ENCODE measurements at regions of chr17 and their contacts with region 1.

Region 1: DNA sequence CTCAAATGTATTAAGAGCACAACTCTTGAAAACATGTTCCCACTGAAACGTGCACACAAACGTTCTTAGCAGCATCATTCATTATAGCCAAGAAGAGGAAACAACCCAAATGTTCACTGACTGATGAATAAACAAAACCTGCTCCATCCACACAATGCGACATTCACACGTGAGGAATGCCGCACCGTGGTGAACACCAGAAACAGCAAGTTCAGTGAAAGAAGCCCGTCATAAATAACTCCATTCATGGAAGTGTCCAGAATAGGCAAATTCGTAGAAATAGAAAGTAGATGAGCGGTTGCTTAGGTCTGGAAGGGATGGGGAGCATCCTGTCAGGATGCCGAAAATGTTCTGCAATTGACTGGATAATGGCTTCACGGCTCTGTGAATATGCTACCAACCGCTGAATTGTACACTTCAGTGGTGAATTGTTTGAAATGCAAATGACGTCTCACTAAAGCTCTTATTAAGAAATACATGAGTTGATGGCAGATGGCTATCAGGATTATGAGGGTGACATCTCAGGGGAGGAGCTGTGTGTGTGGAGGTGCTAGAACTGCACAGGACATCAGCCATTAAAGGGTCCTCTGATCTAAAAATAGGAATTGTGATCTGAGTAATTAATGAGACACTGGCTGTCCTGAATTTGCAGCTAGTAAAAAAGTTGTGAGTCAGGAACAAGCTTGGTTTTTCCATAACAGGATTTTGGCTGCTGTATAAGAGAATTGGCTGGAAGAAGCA is 771.0 kb downstream of the KCNJ18 start:
- DNase-seq: no peak
- H3K4me3 ChIP-seq: no peak overlapping the region
- H3K27ac ChIP-seq: no peak overlapping the region
- H3K4me1 ChIP-seq: no peaks in the 10 kb centered on the region
- H3K27me3 ChIP-seq: no peaks in the 10 kb centered on the region
- CTCF ChIP-seq: no peak

Region 2: DNA sequence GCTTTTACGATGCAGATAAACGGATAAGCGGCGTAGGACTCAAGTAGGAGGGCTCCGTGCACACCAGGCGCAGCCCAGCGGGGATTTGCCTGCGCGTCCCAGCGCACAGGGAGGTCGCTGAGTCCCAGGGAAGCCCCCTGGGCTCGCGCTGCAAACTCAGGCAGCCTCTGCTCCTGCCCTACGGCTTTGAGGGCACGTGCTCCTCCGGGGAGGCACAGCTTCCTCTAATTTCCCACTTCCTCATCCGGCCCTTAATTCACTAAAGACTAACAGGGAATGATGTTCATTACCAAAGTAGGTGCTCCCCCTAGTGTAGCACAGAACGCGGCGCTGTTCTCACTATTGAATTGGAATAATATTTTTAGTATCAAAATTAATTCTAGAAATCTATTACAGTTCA is 54.4 kb after region 1 on chr17:
- intact Hi-C with region 1: loop called (anchors 10 kb)
- DNase-seq: no peak
- H3K4me3 ChIP-seq: no peak overlapping the region
- H3K27ac ChIP-seq: no peak overlapping the region
- H3K4me1 ChIP-seq: no peaks in the 10 kb centered on the region
- H3K27me3 ChIP-seq: no peaks in the 10 kb centered on the region
- CTCF ChIP-seq: no peak

Region 3: DNA sequence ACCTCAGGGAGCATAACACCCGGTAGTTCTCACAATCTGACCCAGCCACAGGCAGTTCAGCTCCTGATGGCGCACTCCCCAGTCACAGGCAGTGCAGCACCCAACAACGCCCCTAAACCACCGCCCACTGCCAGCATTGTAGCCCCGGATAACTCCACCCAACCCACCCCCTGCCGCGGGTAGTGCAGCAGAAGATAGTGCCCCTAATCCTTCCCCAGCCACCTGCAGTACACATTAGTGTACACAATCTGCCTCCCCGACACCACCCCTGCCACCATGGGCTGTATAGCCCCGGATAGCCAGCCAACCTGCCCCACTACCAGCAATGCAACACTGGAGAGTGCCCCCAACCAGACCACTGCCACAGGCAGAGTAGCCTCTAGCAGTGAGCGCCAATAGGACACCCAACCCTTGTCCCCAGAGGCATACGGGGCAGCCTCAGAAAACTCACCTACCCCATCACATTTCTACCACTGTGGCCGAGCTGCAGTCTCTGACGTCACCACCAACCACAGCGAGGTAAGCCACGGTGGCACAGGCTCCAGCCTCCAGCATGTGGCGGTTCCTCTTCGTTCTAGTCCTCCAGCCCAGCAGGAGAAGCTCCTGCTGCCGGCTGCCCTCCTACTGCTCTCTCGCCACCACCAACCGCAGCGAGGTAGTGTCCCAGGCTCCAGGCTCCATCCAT is 106.3 kb after region 1 on chr17:
- intact Hi-C with region 1: no loop called
- DNase-seq: peak in 1 of 5 donors; percentile 53
- H3K4me3 ChIP-seq: no peak overlapping the region
- H3K27ac ChIP-seq: no peak overlapping the region
- H3K4me1 ChIP-seq: no peaks in the 10 kb centered on the region
- H3K27me3 ChIP-seq: no peaks in the 10 kb centered on the region
- CTCF ChIP-seq: no peak